ENCODE measurements at regions of chr2 and their contacts with region 1.

Region 1: DNA sequence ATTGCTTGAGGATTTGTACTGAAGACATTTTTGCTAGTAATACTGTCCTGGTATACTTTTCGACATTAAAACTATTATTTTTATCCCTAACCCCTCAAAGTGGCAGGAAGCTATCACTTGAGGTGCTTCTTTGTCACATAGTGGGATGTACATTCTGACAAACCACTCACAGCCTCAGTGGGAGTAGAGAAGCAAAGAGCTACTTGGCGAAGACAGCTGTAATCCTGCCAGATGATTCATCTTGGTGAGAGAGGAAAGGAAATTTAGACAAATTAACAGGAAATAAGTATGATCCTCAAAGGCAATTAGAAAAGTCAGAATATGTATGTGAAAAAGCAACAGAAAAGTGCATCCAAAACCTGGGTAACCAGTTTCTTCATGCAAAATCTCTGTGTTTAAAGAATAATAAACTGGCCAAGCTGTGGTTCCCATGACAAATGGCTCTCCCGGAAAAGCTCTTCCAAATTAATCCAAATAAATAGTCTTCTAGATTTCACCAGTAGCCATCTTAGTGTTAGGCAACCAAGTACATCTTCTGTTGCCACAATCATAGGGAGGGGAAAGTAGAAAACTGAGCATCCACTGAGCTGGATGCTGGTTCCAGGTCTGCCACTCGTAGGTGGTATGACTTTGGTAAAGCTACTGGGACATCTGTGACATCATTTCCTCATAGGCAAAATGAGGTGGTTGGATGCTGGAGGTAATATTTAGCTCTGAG is 308.0 kb upstream of the LYPD1 start:
- DNase-seq: no peak
- ATAC-seq: peak; percentile 4; the same call in 2 of the 3 replicates
- H3K4me3 ChIP-seq: no peak overlapping the region
- H3K27ac ChIP-seq: no peak overlapping the region
- H3K4me1 ChIP-seq: no peaks in the 10 kb centered on the region
- H3K27me3 ChIP-seq: no peaks in the 10 kb centered on the region
- CTCF ChIP-seq: no peak
- EP300 ChIP-seq: no peak
- POLR2A ChIP-seq: no peak
- RAD21 ChIP-seq: no peak

Region 2: DNA sequence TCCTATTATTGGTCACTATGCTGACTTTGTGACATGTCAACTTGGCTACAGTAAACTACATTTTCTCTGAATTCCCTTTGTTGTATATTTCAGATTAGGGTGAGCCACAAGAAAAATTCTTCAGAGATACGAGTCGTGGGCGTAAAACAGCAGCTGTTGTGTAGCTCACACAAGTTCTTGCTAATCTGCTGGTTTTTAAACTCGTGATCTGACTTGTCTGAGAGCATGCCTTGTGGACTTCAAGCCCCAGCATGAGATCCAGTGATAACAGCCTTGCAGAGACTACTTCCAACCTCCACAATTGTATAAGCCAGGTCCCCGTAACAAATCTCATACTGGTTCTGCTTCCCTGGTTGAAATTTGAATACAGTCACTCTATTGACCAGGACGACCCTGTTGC is 48.2 kb before region 1 on chr2:
- CTCF ChIA-PET with region 1: no interaction called
- POLR2A ChIA-PET with region 1: no interaction called
- RAD21 ChIA-PET with region 1: interaction called, 36 read pairs
- SMC1A ChIA-PET with region 1: interaction called, 113 read pairs
- in situ Hi-C with region 1: no loop called
- intact Hi-C with region 1: no loop called
- DNase-seq: no peak
- ATAC-seq: no peak
- H3K4me3 ChIP-seq: no peak overlapping the region
- H3K27ac ChIP-seq: no peak overlapping the region
- H3K4me1 ChIP-seq: no peaks in the 10 kb centered on the region
- H3K27me3 ChIP-seq: no peaks in the 10 kb centered on the region
- CTCF ChIP-seq: no peak
- EP300 ChIP-seq: no peak
- POLR2A ChIP-seq: no peak
- RAD21 ChIP-seq: no peak

Region 3: DNA sequence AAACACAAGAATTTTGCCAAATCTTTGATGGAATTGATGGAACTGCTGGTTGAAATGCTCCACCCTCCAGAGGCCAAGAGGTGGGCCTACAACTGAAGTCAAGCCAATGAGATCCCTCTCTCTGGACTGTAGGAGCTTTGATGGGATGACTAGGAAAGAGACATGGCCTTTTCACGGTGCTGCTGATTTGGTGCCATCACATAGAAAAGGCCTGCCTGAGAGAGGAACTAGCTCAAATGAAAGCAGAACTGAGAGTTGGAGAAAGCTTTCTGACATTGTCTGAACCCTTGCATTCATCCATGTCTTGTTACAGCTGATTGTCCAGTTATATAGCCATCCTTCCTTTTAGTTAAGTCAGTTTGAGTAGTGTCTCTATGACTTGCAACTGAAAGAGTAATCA is 24.2 kb before region 1 on chr2:
- CTCF ChIA-PET with region 1: interaction called, 8 read pairs
- POLR2A ChIA-PET with region 1: interaction called, 5 read pairs
- RAD21 ChIA-PET with region 1: interaction called, 21 read pairs
- SMC1A ChIA-PET with region 1: interaction called, 211 read pairs
- in situ Hi-C with region 1: no loop called
- intact Hi-C with region 1: no loop called
- DNase-seq: peak; percentile 33
- ATAC-seq: peak; percentile 89
- H3K4me3 ChIP-seq: no peak overlapping the region
- H3K27ac ChIP-seq: no peak overlapping the region
- H3K4me1 ChIP-seq: no peaks in the 10 kb centered on the region
- H3K27me3 ChIP-seq: no peaks in the 10 kb centered on the region
- CTCF ChIP-seq: no peak
- EP300 ChIP-seq: peak in 1 of 2 experiments; percentile 81; a peak in 1 of 4 replicates
- POLR2A ChIP-seq: no peak
- RAD21 ChIP-seq: no peak

Region 4: DNA sequence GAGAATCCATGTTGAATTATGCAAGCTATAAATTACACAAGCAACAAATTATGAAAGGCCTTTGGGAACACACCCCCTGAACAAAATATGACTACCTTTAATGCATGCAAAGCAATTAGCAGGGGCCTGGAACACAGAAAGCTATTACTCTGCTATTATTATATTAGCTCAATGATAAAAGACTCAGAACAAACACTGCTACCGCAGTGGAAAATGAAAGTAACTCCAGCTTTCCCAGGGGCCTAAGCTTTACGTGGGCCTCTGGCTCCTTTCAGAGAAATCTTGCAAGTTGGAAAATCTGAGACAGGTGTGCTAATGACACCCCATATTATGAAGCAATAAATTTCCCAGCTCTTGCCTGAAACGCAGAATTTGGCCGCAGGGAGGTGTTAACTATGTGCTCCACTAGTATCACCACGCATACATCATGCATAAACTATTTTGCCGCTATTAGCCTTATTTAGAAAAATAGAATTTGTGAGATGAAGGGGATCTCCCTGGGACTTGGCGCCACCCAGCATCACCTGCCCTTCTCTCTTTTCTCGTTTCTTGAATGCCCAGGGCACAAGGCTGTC is 13.6 kb after region 1 on chr2:
- CTCF ChIA-PET with region 1: interaction called, 13 read pairs
- POLR2A ChIA-PET with region 1: interaction called, 4 read pairs
- RAD21 ChIA-PET with region 1: interaction called, 4 read pairs
- SMC1A ChIA-PET with region 1: interaction called, 65 read pairs
- in situ Hi-C with region 1: no loop called
- intact Hi-C with region 1: no loop called
- DNase-seq: no peak
- ATAC-seq: peak; percentile 68
- H3K4me3 ChIP-seq: no peak overlapping the region
- H3K27ac ChIP-seq: no peak overlapping the region
- H3K4me1 ChIP-seq: no peaks in the 10 kb centered on the region
- H3K27me3 ChIP-seq: no peaks in the 10 kb centered on the region
- CTCF ChIP-seq: no peak
- EP300 ChIP-seq: no peak
- POLR2A ChIP-seq: no peak
- RAD21 ChIP-seq: no peak

Region 5: GRCh38 chr2:133303134-133303533 is 325.2 kb after region 1 on chr2:
- CTCF ChIA-PET with region 1: no interaction called
- POLR2A ChIA-PET with region 1: no interaction called
- RAD21 ChIA-PET with region 1: no interaction called
- SMC1A ChIA-PET with region 1: no interaction called
- in situ Hi-C with region 1: no loop called
- intact Hi-C with region 1: no loop called
- DNase-seq: no peak
- ATAC-seq: no peak
- H3K4me3 ChIP-seq: no peak overlapping the region
- H3K27ac ChIP-seq: no peak overlapping the region
- H3K4me1 ChIP-seq: no peaks in the 10 kb centered on the region
- H3K27me3 ChIP-seq: no peaks in the 10 kb centered on the region
- CTCF ChIP-seq: no peak
- EP300 ChIP-seq: no peak
- POLR2A ChIP-seq: no peak
- RAD21 ChIP-seq: no peak